A549 (cell line): ENCODE measurements at regions of chr1 and their contacts with region 1.

Region 1: DNA sequence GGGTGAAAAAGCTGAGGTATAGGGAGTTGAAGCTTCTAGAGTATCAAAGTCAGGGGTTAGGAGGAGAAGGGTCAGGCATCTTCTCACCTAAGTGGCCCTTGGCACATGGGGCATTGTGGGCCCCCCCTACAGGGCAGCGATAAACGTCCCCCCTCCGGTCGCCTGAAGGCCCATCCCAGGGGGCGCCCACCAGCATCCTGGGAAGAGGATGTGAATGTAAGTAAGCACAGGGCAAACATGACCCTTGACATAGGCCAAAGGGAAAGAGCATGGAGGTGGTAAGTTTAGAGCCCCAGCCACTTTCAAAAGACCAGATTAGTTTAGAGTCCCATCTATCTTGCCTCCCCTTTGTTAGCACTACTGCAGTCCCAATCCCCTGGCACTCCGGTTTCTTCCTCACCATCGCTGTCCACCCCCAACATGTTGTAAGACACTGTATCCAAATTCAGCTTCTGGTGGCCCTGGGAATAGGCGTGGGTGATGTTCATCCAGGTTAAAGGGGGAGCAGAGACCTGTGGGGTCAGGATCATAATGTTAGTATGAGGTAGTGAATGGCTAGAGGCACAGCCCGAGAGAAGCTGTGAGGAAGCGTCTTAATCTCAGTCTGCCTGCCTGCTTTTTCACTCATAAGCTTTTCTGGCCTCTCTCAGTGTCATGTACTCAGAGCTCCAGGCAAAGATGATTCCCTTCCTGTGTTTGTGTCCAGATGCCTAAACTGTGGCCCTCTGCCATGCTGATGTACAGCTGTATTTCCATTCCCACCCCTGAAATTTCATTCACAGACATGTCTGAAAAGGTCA is 2.7 kb downstream of the ITGA10 start:
- DNase-seq: no peak
- ATAC-seq: no peak
- H3K4me3 ChIP-seq: no peak overlapping the region
- H3K27ac ChIP-seq: peak overlapping the region; percentile 39 to 42; a peak in 4 of 6 replicates
- H3K4me1 ChIP-seq: peaks cover 4% of the 10 kb centered on the region; the same call in 1 of the 3 replicates
- CTCF ChIP-seq: no peak
- EP300 ChIP-seq: no peak
- POLR2A ChIP-seq: no peak
- RAD21 ChIP-seq: no peak

Region 2: DNA sequence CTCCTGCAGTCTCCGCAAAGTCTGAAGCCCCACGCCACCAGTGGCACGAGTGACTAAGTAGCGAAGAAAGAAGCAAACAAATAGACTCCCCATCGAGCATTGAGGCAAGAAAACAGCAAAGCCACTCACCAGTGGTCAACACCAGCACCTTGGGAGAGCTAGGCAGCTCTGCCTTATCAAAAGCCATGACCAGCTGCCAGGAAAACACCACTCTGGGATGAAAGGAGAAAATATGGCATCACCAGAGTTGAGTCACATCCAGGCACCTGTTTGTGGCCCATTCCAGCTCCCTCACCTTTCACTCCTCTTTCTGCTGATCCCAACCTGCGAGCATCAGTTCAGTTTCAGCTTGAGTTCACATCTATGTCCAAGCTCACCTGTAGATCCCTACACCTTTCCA is 217.2 kb before region 1 on chr1:
- CTCF ChIA-PET with region 1: no interaction called
- POLR2A ChIA-PET with region 1: no interaction called
- DNase-seq: no peak
- ATAC-seq: no peak
- H3K4me3 ChIP-seq: no peak overlapping the region
- H3K27ac ChIP-seq: no peak overlapping the region
- H3K4me1 ChIP-seq: peaks cover 14% of the 10 kb centered on the region
- CTCF ChIP-seq: no peak
- EP300 ChIP-seq: no peak
- POLR2A ChIP-seq: no peak
- RAD21 ChIP-seq: no peak

Region 3: GRCh38 chr1:145823565-145824498 is 83.3 kb before region 1 on chr1 and contains the starts of genes POLR3C and RNF115:
- CTCF ChIA-PET with region 1: no interaction called
- POLR2A ChIA-PET with region 1: no interaction called
- DNase-seq: peak; percentile 83 to 93
- ATAC-seq: peak; percentile 96 to 97
- H3K4me3 ChIP-seq: peak within 1 kb of the TSS; percentile 75
- H3K27ac ChIP-seq: peak within 1 kb of the TSS; percentile 94 to 97
- H3K4me1 ChIP-seq: peaks cover 11% of the 10 kb centered on the region
- CTCF ChIP-seq: no peak
- EP300 ChIP-seq: no peak
- POLR2A ChIP-seq: peak; percentile 60
- RAD21 ChIP-seq: peak; percentile 5 to 17; a peak in 2 of 5 replicates
- polyA plus RNA-seq, gene POLR3C: 58.3 and 65.0 TPM in 2 replicates
- polyA plus RNA-seq, gene RNF115: 18.4 and 18.8 TPM in 2 replicates

Region 4: GRCh38 chr1:145885738-145886287 is 21.3 kb before region 1 on chr1 and contains the start of gene ANKRD35:
- CTCF ChIA-PET with region 1: interaction called, 429 read pairs
- POLR2A ChIA-PET with region 1: no interaction called
- DNase-seq: peak; percentile 58 to 98
- ATAC-seq: peak; percentile 98 to 100
- H3K4me3 ChIP-seq: peak within 1 kb of the TSS; percentile 60
- H3K27ac ChIP-seq: peak within 1 kb of the TSS in 1 of 2 experiments; percentile 26; a peak in 2 of 6 replicates
- H3K4me1 ChIP-seq: peaks cover 22% of the 10 kb centered on the region
- CTCF ChIP-seq: no peak
- EP300 ChIP-seq: no peak
- POLR2A ChIP-seq: no peak
- RAD21 ChIP-seq: no peak
- polyA plus RNA-seq, gene ANKRD35: not detected in 2 replicates

Region 5: DNA sequence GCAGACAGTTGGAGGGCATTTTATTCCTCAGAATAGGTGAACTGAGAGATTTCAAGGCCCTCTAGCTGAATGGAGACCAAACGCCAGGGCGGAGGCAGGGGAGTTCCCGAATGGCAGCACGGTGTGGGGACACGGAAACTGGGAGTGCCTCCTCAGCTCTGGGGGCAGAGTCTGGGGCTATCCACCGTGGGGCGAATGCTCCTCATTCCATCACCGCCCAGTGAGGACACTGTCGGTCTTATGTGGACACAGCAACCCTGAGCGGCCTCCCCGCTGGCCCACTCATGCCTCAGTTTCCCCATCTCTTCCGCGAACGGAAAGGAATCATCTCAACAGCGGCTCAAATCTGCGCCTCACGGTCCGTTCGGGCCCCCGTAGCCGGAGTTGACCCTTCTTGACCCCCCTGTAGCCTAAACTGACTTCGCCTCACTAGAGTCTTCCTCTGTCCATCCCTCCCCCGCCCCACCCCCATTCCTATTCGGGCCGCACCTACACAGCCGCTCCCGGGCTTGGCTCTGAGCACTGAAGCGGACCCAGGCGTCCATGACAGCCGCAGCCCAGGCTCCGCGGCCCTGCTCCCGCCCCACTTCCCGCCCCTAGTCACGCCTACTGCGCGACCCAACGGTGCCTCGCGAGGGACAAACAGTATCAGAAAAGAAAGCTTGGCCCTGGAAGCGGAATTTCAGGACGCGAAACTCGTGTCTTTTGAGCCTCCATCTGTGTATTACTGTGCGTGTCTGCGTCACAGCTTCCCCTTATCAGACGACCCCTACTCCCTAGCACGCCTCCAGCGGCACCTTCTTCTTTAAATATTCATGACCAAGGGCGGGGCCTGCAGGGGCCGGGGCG is 11.2 kb after region 1 on chr1 and contains the start of gene PEX11B:
- CTCF ChIA-PET with region 1: interaction called, 17 read pairs
- POLR2A ChIA-PET with region 1: interaction called, 4 read pairs
- DNase-seq: peak; percentile 87 to 89
- ATAC-seq: peak; percentile 89 to 95
- H3K4me3 ChIP-seq: peak within 1 kb of the TSS; percentile 85
- H3K27ac ChIP-seq: peak within 1 kb of the TSS; percentile 85 to 92
- H3K4me1 ChIP-seq: peaks cover 10% of the 10 kb centered on the region
- CTCF ChIP-seq: no peak
- EP300 ChIP-seq: no peak
- POLR2A ChIP-seq: peak; percentile 45
- RAD21 ChIP-seq: no peak
- polyA plus RNA-seq, gene PEX11B: 35.5 and 40.6 TPM in 2 replicates

Region 6: GRCh38 chr1:145957443-145958319 is 50.5 kb after region 1 on chr1 and contains the start of gene LIX1L:
- CTCF ChIA-PET with region 1: interaction called, 17 read pairs
- POLR2A ChIA-PET with region 1: no interaction called
- DNase-seq: peak; percentile 95 to 97
- ATAC-seq: peak; percentile 82 to 89
- H3K4me3 ChIP-seq: peak within 1 kb of the TSS; percentile 68
- H3K27ac ChIP-seq: peak within 1 kb of the TSS; percentile 91 to 97
- H3K4me1 ChIP-seq: peaks cover 42% of the 10 kb centered on the region
- CTCF ChIP-seq: no peak
- EP300 ChIP-seq: no peak
- POLR2A ChIP-seq: peak; percentile 66
- RAD21 ChIP-seq: no peak
- polyA plus RNA-seq, gene LIX1L: 33.0 and 35.8 TPM in 2 replicates

Region 7: GRCh38 chr1:145996433-145997015 is 89.4 kb after region 1 on chr1 and contains the start of gene TXNIP:
- CTCF ChIA-PET with region 1: no interaction called
- POLR2A ChIA-PET with region 1: no interaction called
- DNase-seq: peak; percentile 87 to 99
- ATAC-seq: peak; percentile 100
- H3K4me3 ChIP-seq: peak within 1 kb of the TSS; percentile 42
- H3K27ac ChIP-seq: peak within 1 kb of the TSS; percentile 46 to 68; a peak in 4 of 6 replicates
- H3K4me1 ChIP-seq: peaks cover 7% of the 10 kb centered on the region; the same call in 1 of the 3 replicates
- CTCF ChIP-seq: no peak
- EP300 ChIP-seq: no peak
- POLR2A ChIP-seq: no peak
- RAD21 ChIP-seq: no peak
- polyA plus RNA-seq, gene TXNIP: 3.1 and 3.3 TPM in 2 replicates